Endothelial cell of umbilical vein (primary cell): ENCODE measurements at regions of chr11 and their contacts with region 1.

Region 1: DNA sequence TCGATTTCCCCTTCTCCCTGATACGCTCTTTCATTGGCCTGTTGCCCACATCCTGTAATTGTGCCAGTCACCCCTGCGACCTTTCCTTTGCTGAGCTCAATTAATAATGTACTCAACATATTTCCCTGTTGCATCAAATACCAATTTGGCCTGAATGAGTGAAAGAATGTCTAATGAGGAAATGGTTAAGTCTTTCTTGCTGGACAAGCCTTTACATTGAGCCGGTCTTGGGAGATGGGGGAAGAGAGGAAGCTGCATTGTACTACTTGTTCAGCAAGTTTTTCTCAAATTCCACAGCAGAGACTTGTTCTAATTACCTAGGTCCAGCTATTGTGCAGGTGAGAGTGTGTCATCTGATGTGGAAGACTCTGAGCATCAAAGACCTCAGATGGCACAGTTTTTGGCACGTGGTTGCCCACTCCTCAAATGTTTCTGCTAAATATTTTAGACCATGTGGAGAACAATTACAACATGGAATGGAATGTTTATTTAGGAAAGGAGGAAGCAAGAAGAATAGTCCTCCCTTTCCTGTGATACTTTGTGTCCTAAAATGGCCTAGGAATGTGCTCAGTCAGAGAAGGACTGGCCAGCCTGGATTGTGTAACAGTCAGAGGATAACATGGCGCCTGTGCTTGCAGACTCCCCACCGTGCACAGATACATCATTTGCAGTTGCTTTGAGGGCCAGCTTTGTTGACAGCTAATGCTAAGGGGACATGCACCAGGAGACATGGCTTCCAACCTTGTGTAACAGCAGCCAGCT is 129.5 kb upstream of the E2F8 start:
- DNase-seq: peak; percentile 94
- H3K4me3 ChIP-seq: peak overlapping the region in 1 of 3 experiments; percentile 28
- H3K27ac ChIP-seq: peak overlapping the region; percentile 91
- H3K4me1 ChIP-seq: peaks cover 83% of the 10 kb centered on the region
- H3K27me3 ChIP-seq: no peaks in the 10 kb centered on the region
- CTCF ChIP-seq: no peak
- POLR2A ChIP-seq: no peak

Region 2: GRCh38 chr11:19240420-19241259 is 129.6 kb before region 1 on chr11 and contains the start of gene E2F8:
- CTCF ChIA-PET with region 1: no interaction called
- POLR2A ChIA-PET with region 1: no interaction called
- dilution Hi-C with region 1: no loop called
- intact Hi-C with region 1: loop called (anchors 2 kb)
- DNase-seq: peak; percentile 96
- H3K4me3 ChIP-seq: peak within 1 kb of the TSS; percentile 88 to 92 (median 88)
- H3K27ac ChIP-seq: peak within 1 kb of the TSS; percentile 44
- H3K4me1 ChIP-seq: peaks cover 22% of the 10 kb centered on the region
- H3K27me3 ChIP-seq: no peaks in the 10 kb centered on the region
- CTCF ChIP-seq: no peak
- POLR2A ChIP-seq: peak; percentile 41
- total RNA-seq, gene E2F8: 16.5 and 19.1 TPM in 2 replicates

Region 3: GRCh38 chr11:19344751-19345518 is 25.3 kb before region 1 on chr11:
- CTCF ChIA-PET with region 1: interaction called, 14 read pairs
- POLR2A ChIA-PET with region 1: interaction called, 7 read pairs
- dilution Hi-C with region 1: no loop called
- intact Hi-C with region 1: loop called (anchors 1 kb)
- DNase-seq: peak; percentile 43
- H3K4me3 ChIP-seq: peak overlapping the region in 2 of 3 experiments; percentile 32 to 58
- H3K27ac ChIP-seq: no peak overlapping the region
- H3K4me1 ChIP-seq: peaks cover 12% of the 10 kb centered on the region
- H3K27me3 ChIP-seq: peaks cover 23 to 36% of the 10 kb centered on the region in 2 experiments
- CTCF ChIP-seq: no peak
- POLR2A ChIP-seq: no peak

Region 4: GRCh38 chr11:19398772-19399527 is 28.7 kb after region 1 on chr11:
- CTCF ChIA-PET with region 1: no interaction called
- POLR2A ChIA-PET with region 1: no interaction called
- dilution Hi-C with region 1: no loop called
- intact Hi-C with region 1: no loop called
- DNase-seq: no peak
- H3K4me3 ChIP-seq: no peak overlapping the region
- H3K27ac ChIP-seq: no peak overlapping the region
- H3K4me1 ChIP-seq: no peaks in the 10 kb centered on the region
- H3K27me3 ChIP-seq: no peaks in the 10 kb centered on the region
- CTCF ChIP-seq: no peak
- POLR2A ChIP-seq: no peak

Region 5: GRCh38 chr11:19595840-19596751 is 225.8 kb after region 1 on chr11:
- CTCF ChIA-PET with region 1: no interaction called
- POLR2A ChIA-PET with region 1: no interaction called
- dilution Hi-C with region 1: no loop called
- intact Hi-C with region 1: loop called (anchors 5 kb)
- DNase-seq: peak; percentile 91
- H3K4me3 ChIP-seq: no peak overlapping the region
- H3K27ac ChIP-seq: peak overlapping the region; percentile 95
- H3K4me1 ChIP-seq: peaks cover 34% of the 10 kb centered on the region
- H3K27me3 ChIP-seq: no peaks in the 10 kb centered on the region
- CTCF ChIP-seq: no peak
- POLR2A ChIP-seq: no peak

Region 6: DNA sequence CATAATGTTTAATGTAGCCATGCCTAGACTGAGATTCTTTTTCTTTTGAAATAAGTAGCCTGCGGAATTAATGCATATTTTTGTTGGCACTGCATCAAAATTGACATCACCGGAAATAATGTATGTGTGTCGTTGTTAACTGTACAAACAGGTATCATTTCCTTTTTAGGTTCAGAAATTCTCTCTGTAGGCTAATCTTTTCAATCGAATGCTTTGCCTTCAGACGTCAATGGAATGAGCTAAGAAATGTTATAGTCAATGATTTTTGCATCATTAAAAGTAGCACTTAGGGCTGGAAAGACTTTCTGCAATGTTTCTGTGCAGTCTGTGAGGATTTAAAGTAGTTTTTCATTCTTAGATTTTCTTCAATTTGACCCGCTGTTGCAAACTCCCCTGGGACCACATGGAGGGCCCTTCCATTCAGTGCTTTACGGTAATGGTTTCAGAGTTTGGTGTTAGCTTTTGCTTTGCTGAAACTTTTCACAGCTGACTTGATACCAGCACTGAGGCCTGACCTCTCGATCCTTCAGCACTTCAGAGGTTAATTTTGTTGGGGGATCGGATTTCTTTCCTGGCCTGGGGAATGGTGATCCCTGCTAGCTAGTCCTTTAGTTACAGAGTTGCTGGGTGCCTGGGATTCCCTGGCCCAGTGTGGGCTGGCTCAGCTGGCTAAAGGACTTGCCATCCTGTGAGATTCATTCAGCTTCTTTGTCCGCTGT is 652.2 kb after region 1 on chr11:
- CTCF ChIA-PET with region 1: no interaction called
- POLR2A ChIA-PET with region 1: no interaction called
- dilution Hi-C with region 1: no loop called
- intact Hi-C with region 1: loop called (anchors 5 kb)
- DNase-seq: peak; percentile 90
- H3K4me3 ChIP-seq: peak overlapping the region in 1 of 3 experiments; percentile 13
- H3K27ac ChIP-seq: peak overlapping the region; percentile 88
- H3K4me1 ChIP-seq: peaks cover 25% of the 10 kb centered on the region
- H3K27me3 ChIP-seq: no peaks in the 10 kb centered on the region
- CTCF ChIP-seq: no peak
- POLR2A ChIP-seq: no peak